ENCODE measurements at regions of chr9 and their contacts with region 1.

Region 1: GRCh38 chr9:114738581-114739316 is 56.8 kb upstream of the TEX48 start:
- DNase-seq: peak; percentile 89
- ATAC-seq: peak; percentile 95
- H3K4me3 ChIP-seq: no peak overlapping the region
- H3K27ac ChIP-seq: no peak overlapping the region
- H3K4me1 ChIP-seq: peaks cover 2% of the 10 kb centered on the region; the same call in 1 of the 2 replicates
- H3K27me3 ChIP-seq: no peaks in the 10 kb centered on the region; the same call in none of the 2 replicates
- CTCF ChIP-seq: peak; percentile 97
- POLR2A ChIP-seq: peak; percentile 58; the same call in 1 of the 2 replicates
- RAD21 ChIP-seq: peak; percentile 99

Region 2: DNA sequence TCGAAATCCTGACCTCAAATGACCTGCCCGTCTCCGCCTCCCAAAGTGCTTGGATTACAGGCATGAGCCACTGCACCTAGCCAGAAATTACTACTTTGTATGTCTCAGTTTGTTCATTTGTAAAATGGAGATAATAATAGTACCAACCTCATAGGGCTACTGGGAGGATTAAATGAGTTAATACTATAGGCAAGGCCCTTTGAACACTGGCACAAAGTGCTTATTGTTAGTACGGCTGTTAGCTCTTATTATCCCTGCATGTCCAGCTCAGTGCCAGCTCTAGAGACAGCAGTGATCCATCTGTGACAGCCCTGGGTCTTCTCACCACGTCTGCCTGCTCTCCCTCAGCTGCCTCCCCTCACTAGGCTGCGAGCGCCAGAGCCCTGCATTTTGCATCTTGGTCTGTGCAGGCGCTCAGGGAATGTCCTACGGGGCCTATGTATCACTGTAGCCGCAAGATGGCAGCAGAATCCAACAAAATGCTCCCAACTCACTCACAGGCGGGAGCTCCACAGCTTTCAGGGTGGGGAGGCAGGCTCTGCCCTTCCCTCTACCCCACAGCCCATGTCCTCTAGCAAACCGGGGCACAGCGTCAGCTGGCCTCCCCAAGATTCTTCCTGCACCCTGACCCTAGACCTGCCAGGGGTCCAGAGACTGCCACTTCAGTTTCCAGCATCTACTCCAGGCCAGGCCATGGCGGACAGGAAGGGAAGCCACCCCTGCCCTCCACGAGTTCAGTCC is 333.3 kb before region 1 on chr9:
- CTCF ChIA-PET with region 1: no interaction called
- POLR2A ChIA-PET with region 1: no interaction called
- dilution Hi-C with region 1: no loop called
- in situ Hi-C with region 1: loop called (anchors 10 kb)
- intact Hi-C with region 1: loop called (anchors 5 kb)
- DNase-seq: peak; percentile 78
- ATAC-seq: peak; percentile 99
- H3K4me3 ChIP-seq: no peak overlapping the region
- H3K27ac ChIP-seq: no peak overlapping the region
- H3K4me1 ChIP-seq: no peaks in the 10 kb centered on the region
- H3K27me3 ChIP-seq: peaks cover 5% of the 10 kb centered on the region; the same call in 1 of the 2 replicates
- CTCF ChIP-seq: peak; percentile 93
- POLR2A ChIP-seq: no peak
- RAD21 ChIP-seq: peak; percentile 95

Region 3: DNA sequence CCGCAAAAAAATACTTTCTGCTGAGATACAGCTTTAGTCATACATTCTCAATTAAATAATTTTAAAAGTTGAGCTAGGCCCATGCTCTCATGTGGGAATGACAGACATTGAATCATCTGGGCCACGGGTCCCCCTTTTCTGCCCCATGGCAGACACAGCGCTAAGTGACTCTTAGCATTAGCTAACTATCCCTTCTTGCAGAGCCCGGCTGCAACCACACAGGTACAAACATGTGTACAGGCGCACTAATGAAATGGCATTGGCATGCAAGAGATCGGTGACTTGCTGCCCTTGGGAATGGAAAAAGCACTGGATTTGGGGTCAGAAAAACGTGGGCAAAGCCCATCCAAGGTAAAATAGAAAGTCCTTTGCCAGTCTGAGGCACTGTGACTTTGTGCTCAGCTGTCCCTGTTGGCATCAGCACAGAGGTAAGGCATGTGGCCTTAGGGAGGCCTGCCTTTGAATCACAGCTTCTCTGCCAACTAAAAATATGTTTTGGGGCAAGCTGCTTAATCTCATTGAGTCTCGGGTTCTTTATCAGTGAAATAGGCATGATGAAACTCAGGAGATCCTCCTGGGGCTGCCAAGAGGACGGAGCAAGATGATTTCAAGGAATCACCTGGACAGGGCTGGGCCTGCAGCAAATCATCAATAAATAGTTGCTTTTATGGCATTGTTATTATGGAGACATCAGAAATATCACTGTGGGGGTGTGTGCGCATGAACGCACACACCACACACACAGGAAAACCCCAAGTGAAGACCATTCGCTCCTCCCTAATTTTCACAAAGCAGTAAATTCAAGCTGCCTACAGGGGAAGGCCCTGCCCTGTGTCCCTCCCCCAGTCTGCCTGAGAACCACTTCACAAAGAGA is 287.7 kb before region 1 on chr9:
- CTCF ChIA-PET with region 1: no interaction called
- POLR2A ChIA-PET with region 1: no interaction called
- dilution Hi-C with region 1: no loop called
- in situ Hi-C with region 1: no loop called
- intact Hi-C with region 1: no loop called
- DNase-seq: no peak
- ATAC-seq: no peak
- H3K4me3 ChIP-seq: no peak overlapping the region
- H3K27ac ChIP-seq: no peak overlapping the region
- H3K4me1 ChIP-seq: peaks cover 3% of the 10 kb centered on the region; the same call in 1 of the 2 replicates
- H3K27me3 ChIP-seq: peaks cover 8% of the 10 kb centered on the region; the same call in 1 of the 2 replicates
- CTCF ChIP-seq: no peak
- POLR2A ChIP-seq: no peak
- RAD21 ChIP-seq: no peak

Region 4: DNA sequence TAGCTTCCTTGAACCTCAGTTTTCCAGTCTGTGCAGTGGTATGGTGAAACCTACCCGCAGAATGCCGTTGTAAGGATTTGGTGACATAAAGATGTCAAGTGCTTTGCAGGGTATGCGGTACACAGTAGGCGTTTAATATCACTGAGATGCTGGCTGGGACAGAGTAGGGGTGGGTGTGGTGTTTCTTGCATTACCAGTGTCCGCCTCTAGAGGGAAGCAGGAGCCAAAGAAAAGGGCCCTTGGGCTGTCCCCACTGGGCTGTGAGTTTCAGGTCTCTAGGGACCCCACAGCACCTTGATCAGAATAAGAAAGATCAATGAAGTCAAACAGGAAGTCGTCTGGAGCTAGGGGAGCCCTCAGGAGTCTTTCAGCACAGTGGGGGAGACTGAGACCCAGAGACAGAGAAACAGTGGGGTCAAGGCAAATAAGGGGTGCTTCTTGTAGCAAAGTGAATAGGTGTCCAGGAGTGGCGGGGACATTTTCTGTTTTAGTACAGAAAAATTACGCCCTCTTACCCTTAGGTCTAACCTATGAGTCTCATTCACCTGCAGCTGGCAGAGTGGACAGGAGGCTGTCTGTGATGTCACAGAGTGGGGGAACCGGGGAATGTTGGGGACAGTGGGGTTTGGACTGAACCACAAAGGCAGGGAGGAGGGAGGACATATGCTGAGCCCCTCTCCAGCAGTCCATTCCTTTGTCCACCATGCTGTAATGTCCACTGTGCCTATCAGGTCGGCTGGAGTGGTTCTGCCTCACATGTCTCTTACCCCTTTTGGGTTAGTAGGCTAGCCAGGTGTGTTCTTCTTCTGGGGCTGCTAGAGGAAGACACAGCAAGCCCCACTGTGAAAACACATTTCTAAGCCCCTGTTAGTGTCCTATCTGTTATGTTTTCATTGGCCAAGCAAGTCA is 76.4 kb before region 1 on chr9:
- CTCF ChIA-PET with region 1: no interaction called
- POLR2A ChIA-PET with region 1: no interaction called
- dilution Hi-C with region 1: no loop called
- in situ Hi-C with region 1: loop called (anchors 5 kb)
- intact Hi-C with region 1: loop called (anchors 1 kb)
- DNase-seq: peak; percentile 33
- ATAC-seq: peak; percentile 98
- H3K4me3 ChIP-seq: no peak overlapping the region
- H3K27ac ChIP-seq: no peak overlapping the region
- H3K4me1 ChIP-seq: no peaks in the 10 kb centered on the region
- H3K27me3 ChIP-seq: peaks cover 30% of the 10 kb centered on the region
- CTCF ChIP-seq: peak; percentile 84
- POLR2A ChIP-seq: no peak
- RAD21 ChIP-seq: peak; percentile 92

Region 5: DNA sequence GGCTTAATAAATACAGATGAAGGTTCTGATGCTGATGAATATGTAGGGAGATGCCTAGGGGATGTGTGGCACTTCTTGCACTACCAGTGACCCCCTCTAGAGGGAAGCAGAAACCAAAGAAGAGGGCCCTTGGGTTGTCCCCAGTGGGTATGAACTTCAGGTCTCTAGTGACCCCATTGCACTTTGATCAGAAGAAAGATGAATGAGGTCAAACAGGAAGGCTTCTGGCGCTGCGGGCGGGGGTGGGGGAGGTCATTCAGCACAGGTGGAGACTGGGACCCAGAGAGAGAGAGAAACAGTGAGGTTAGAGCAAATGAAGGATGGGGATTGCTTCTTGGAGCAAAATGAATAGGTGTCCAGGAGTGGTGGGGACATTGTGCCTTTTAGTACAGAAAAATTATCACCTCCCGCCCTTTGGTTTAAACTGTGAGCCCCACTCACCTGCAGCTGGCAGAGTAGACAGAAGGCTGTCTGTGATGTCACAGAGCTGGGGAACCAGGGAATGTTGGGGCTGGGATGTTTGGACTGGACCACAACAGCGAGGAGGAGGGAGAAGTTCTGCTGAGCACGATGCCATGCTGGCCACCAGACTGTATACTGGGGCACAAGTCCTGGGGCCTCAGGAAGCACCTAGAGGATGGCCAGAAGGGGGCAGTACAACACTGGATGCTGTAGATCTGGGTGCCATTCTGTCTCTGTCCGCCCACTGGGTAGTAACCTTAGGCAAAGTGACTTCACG is 57.0 kb before region 1 on chr9 and contains the start of gene TEX48:
- CTCF ChIA-PET with region 1: interaction called, 25 read pairs
- POLR2A ChIA-PET with region 1: no interaction called
- dilution Hi-C with region 1: no loop called
- in situ Hi-C with region 1: no loop called
- intact Hi-C with region 1: loop called (anchors 1 kb)
- DNase-seq: peak; percentile 74
- ATAC-seq: peak; percentile 58
- H3K4me3 ChIP-seq: no peak within 1 kb of the TSS
- H3K27ac ChIP-seq: no peak within 1 kb of the TSS
- H3K4me1 ChIP-seq: peaks cover 9% of the 10 kb centered on the region
- H3K27me3 ChIP-seq: no peaks in the 10 kb centered on the region
- CTCF ChIP-seq: peak; percentile 70
- POLR2A ChIP-seq: no peak
- RAD21 ChIP-seq: peak; percentile 75
- total RNA-seq, gene TEX48: not detected in 2 replicates

Region 6: DNA sequence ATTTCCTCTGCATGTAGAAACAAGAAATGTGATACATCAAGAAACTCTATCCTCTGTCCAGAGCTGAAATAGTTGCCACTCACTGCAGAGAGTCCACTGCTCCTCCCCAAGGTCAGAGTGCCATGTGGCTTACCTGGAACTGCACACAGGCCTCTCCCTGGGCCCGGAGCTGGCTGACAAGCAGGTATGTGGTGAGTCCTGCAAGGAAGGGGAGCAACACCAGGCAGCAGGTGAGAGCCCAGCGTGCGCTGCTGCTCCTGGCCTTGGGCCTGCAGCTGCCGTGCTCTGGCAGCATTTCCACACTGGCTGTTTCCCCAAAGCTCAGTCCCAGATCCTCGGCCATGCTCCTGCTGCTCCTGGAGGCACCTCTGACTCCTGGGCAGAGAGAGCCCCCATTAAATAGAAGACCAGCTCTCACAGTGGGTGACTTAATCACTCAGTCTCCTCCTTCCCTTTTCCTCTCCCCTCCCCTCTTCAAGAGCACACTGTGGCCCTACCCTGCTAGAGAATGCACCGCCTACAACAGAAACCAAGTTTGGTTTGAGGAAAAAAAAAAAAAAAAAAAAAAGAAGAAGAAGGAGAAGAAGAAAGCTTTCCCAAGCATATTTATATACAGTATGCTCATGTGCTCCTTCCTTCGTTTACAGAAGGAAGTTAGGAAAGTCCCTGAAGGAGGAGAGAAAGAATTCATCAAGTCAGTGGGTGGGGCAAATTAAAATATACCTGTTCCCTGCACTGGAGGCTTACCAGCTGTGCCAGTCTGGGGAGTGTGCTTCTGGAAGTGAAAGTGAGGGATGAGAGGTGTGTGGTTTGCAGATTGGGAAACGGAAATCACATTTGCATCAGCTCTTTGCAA is 67.1 kb after region 1 on chr9 and contains the start of gene TNFSF15:
- CTCF ChIA-PET with region 1: no interaction called
- POLR2A ChIA-PET with region 1: no interaction called
- dilution Hi-C with region 1: no loop called
- in situ Hi-C with region 1: no loop called
- intact Hi-C with region 1: no loop called
- DNase-seq: peak; percentile 44
- ATAC-seq: peak; percentile 60
- H3K4me3 ChIP-seq: no peak within 1 kb of the TSS
- H3K27ac ChIP-seq: peak within 1 kb of the TSS; percentile 15; the same call in 1 of the 2 replicates
- H3K4me1 ChIP-seq: peaks cover 15% of the 10 kb centered on the region
- H3K27me3 ChIP-seq: peaks cover 6% of the 10 kb centered on the region
- CTCF ChIP-seq: no peak
- POLR2A ChIP-seq: no peak
- RAD21 ChIP-seq: no peak
- total RNA-seq, gene TNFSF15: under 0.01 and 0.18 TPM in 2 replicates

Region 7: DNA sequence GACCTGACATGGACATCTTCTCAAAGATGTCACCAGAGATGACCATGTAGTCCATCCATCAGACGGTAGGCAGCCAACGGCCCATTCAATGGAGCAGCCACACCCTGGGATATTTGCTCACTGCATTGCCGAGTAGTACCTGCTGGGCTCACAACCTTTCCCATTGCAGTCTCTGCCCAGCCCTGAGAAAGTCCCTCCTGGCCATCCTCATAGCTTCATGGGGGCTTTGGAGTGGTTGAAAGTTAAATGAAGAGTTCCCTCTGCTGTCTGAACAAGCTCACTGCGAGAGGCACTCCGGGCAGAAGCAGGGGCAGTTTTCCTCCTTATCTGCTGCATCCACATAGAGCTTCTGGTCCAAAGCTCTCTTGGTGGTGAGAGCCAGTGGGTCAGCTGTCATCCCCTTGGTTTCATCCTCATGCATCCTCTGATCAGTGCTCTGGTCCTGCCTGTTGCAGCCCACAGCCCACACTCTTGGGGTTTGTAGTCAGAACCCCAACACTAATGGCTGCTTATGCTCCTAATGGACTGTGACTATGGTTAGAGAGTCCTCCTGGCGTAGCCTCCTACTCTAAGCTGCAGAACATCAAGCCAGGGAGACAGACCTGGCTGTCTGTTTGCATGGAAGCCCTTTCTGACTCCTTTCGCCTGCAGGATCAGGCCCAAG is 168.3 kb after region 1 on chr9:
- CTCF ChIA-PET with region 1: interaction called, 25 read pairs
- POLR2A ChIA-PET with region 1: no interaction called
- dilution Hi-C with region 1: no loop called
- in situ Hi-C with region 1: loop called (anchors 5 kb)
- intact Hi-C with region 1: loop called (anchors 1 kb)
- DNase-seq: peak; percentile 61
- ATAC-seq: peak; percentile 76
- H3K4me3 ChIP-seq: no peak overlapping the region
- H3K27ac ChIP-seq: no peak overlapping the region
- H3K4me1 ChIP-seq: peaks cover 20% of the 10 kb centered on the region
- H3K27me3 ChIP-seq: no peaks in the 10 kb centered on the region; the same call in 1 of the 2 replicates
- CTCF ChIP-seq: peak; percentile 87
- POLR2A ChIP-seq: no peak
- RAD21 ChIP-seq: peak; percentile 89

Region 8: DNA sequence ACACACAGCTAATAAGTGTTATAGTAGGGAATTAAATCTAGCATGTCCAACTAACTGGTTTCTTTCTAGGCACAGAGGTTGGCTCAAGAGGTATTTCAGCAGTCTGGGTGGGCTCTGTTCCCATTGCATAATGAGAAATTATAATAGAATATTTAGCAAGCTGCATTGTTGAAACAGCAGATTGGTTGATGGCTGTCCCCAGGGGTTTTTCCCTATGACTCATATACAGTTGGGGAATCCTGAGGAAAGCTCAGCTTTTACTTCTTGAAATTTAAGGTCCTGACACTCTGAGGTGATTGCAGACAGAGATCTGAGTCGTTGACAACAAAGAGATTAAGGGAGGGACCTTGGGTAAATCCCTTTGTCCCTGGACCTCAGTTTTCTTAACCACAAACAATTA is 229.9 kb after region 1 on chr9:
- CTCF ChIA-PET with region 1: no interaction called
- POLR2A ChIA-PET with region 1: no interaction called
- dilution Hi-C with region 1: no loop called
- in situ Hi-C with region 1: no loop called
- intact Hi-C with region 1: loop called (anchors 1 kb)
- DNase-seq: peak; percentile 17
- ATAC-seq: peak; percentile 35; the same call in 1 of the 2 replicates
- H3K4me3 ChIP-seq: no peak overlapping the region
- H3K27ac ChIP-seq: no peak overlapping the region
- H3K4me1 ChIP-seq: no peaks in the 10 kb centered on the region
- H3K27me3 ChIP-seq: peaks cover 12% of the 10 kb centered on the region
- CTCF ChIP-seq: no peak
- POLR2A ChIP-seq: no peak
- RAD21 ChIP-seq: no peak